ENCODE measurements at regions of chrX and their contacts with region 1.

Region 1: GRCh38 chrX:120560842-120561633 is at the start of gene CUL4B:
- DNase-seq: peak; percentile 86
- H3K4me3 ChIP-seq: peak within 1 kb of the TSS; percentile 76
- H3K27ac ChIP-seq: peak within 1 kb of the TSS; percentile 99
- H3K27me3 ChIP-seq: no peaks in the 10 kb centered on the region
- CTCF ChIP-seq: no peak
- polyA plus RNA-seq, gene CUL4B: 46.3 and 64.5 TPM in 2 replicates

Region 2: GRCh38 chrX:120549483-120550452 is 11.3 kb before region 1 on chrX:
- CTCF ChIA-PET with region 1: no interaction called
- POLR2A ChIA-PET with region 1: interaction called, 16 read pairs
- DNase-seq: peak; percentile 66
- H3K4me3 ChIP-seq: no peak overlapping the region
- H3K27ac ChIP-seq: peak overlapping the region; percentile 95
- H3K27me3 ChIP-seq: no peaks in the 10 kb centered on the region
- CTCF ChIP-seq: no peak

Region 3: DNA sequence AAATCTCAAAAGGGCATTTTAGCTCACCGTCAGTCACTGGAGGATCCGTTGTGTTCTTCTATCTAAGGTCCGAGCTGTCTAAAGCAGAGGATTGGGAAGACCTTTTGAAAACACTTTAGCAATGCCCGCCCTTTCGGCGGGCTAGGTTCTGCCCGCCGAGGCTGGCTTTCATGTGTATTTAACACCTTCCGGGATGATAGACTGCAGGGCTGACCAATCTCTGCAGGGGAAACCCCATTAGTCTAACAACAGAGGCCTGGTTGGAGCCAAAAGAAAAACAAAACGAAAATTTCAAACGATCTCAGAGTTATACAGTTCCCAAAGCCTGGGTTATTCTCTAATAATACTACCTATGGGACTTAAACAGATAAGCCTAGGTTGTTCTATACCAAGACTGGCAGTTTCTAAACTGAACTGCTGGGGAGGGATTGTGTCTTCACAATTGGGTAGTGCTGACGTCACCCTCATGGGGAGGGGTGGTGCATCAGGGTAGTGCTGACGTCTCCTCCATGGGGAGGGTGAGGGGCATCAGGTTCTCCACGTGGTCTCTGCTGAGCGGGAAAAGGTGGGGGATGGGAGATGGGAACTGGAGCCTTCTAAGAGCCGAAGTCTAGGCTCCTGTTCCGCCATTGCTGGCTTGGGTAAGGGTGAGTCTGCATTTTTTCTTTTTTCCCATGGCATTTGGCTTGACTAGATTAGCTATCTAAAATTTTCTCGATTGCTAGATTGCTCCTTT is 14.5 kb after region 1 on chrX:
- CTCF ChIA-PET with region 1: no interaction called
- POLR2A ChIA-PET with region 1: no interaction called
- DNase-seq: no peak
- H3K4me3 ChIP-seq: no peak overlapping the region
- H3K27ac ChIP-seq: no peak overlapping the region
- H3K27me3 ChIP-seq: no peaks in the 10 kb centered on the region
- CTCF ChIP-seq: no peak

Region 4: DNA sequence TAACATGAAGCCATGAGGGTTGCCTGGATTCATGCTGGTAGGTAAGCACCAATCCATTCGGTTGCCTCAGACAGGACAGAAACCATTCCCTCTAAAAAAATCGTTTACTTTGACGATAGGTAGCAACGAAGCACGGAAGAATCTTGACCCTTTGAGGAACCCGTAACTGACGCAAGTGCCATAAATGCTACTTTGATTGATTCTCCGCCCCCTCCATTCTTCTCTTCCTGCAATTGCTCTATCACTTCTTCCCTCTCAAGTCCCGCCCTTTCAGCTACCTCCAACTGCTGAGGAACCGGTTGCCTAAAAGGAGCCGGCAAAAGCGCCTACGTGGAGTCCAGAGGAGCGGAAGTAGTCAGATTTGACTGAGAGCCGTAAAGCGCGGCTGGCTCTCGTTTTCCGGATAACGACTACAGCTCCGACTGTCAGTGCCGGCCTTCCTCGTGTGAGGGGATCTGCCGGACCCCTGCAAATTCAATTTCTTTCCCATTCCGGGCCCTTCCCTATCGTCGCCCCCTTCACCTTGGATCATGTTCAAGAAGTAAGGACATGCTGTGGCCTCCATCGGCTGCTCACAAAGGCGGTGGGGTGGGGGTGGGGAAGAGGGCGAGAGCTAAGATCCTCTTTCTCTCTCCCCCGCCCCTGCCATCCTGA is 42.8 kb after region 1 on chrX and contains the start of gene MCTS1:
- CTCF ChIA-PET with region 1: interaction called, 5 read pairs
- POLR2A ChIA-PET with region 1: interaction called, 39 read pairs
- DNase-seq: peak; percentile 89
- H3K4me3 ChIP-seq: peak within 1 kb of the TSS; percentile 61
- H3K27ac ChIP-seq: peak within 1 kb of the TSS; percentile 86
- H3K27me3 ChIP-seq: no peaks in the 10 kb centered on the region
- CTCF ChIP-seq: no peak
- polyA plus RNA-seq, gene MCTS1: 71.6 and 97.5 TPM in 2 replicates

Measured in AG04450 (cell line).